Activated naive CD4-positive, alpha-beta T cell treated with anti-CD3 and anti-CD28 coated beads, Interleukin-2, amount 10 ng/mL, durations not matched to agents 7 days and 5 days (primary cell): ENCODE measurements at regions of chr4 and their contacts with region 1.

Region 1: DNA sequence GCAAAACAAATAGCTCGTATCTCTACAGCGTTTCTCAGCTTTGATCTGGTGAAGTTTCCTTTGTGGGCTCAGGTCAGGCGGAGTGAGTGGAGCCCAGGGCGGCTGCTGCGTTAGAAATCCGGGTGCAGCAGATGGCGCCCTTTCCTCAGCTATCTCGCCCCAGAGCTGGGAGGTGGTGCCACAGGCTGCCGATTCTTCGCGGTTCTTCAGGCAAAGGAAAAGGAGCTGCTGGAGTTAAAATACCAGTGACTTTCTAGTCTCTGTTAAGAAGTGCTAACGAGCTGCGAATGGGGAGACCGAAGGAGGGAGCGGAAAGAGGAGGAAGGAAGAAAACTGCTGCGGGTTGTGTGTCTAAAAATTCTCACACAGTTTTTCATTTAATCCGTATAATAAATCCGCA is 114.6 kb downstream of the CPE start:
- DNase-seq: peak; percentile 75
- H3K4me3 Mint-ChIP-seq: no peak overlapping the region
- H3K27ac Mint-ChIP-seq: no peak overlapping the region
- H3K4me1 Mint-ChIP-seq: peaks cover 4% of the 10 kb centered on the region
- H3K27me3 Mint-ChIP-seq: peaks cover 23% of the 10 kb centered on the region

Region 2: GRCh38 chr4:165301833-165302232 is 191.5 kb before region 1 on chr4:
- CTCF ChIA-PET with region 1: no interaction called
- DNase-seq: peak; percentile 59
- H3K4me3 Mint-ChIP-seq: peak overlapping the region; percentile 67
- H3K27ac Mint-ChIP-seq: peak overlapping the region; percentile 87
- H3K4me1 Mint-ChIP-seq: peaks cover 35% of the 10 kb centered on the region
- H3K27me3 Mint-ChIP-seq: no peaks in the 10 kb centered on the region

Region 3: DNA sequence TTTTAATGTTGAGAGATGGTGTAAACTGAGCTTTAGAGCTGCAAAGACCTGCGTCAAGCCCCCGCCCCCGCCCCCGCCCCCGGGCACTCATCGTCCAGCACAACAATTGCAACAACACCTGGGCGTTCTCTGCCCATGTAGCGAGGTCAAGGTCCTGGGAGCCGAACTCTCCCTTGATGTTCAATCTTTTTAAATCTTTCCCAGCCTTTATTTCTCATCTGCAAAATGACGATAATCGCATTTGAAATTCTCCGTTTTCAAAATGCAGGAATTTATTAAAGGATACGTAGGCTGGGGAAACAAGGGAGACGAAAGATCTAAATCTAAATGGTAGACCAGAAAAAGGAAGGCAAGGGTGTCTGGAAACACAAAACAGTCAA is 166.5 kb before region 1 on chr4:
- CTCF ChIA-PET with region 1: no interaction called
- DNase-seq: no peak
- H3K4me3 Mint-ChIP-seq: no peak overlapping the region
- H3K27ac Mint-ChIP-seq: no peak overlapping the region
- H3K4me1 Mint-ChIP-seq: peaks cover 22% of the 10 kb centered on the region
- H3K27me3 Mint-ChIP-seq: no peaks in the 10 kb centered on the region

Region 4: DNA sequence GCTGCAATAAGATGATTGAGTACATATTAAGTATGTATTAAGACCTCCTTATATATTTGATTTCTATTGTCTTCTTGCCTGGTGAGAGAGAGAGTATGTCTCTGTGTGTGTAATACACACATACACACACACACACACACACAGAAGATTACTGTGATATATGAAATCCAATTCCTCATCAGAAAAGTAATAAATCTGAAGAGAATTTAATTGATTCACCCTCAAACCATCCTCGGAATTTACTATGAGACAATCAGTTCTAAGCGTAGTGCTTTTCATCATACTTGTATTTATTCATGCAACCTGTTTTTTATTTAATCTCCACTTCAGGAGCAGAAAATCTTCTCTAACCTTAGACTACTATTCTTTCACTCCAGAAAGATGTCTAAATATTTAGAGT is 317.4 kb after region 1 on chr4:
- CTCF ChIA-PET with region 1: no interaction called
- DNase-seq: no peak
- H3K4me3 Mint-ChIP-seq: no peak overlapping the region
- H3K27ac Mint-ChIP-seq: no peak overlapping the region
- H3K4me1 Mint-ChIP-seq: no peaks in the 10 kb centered on the region
- H3K27me3 Mint-ChIP-seq: no peaks in the 10 kb centered on the region

Region 5: GRCh38 chr4:166091912-166092510 is 598.7 kb after region 1 on chr4:
- CTCF ChIA-PET with region 1: interaction called, 21 read pairs
- DNase-seq: no peak
- H3K4me3 Mint-ChIP-seq: no peak overlapping the region
- H3K27ac Mint-ChIP-seq: no peak overlapping the region
- H3K4me1 Mint-ChIP-seq: no peaks in the 10 kb centered on the region
- H3K27me3 Mint-ChIP-seq: no peaks in the 10 kb centered on the region